ENCODE measurements at regions of chr12 and their contacts with region 1.

Region 1: GRCh38 chr12:55829967-55830600 is 697 bp upstream of the DNAJC14 start:
- DNase-seq: peak; percentile 68
- ATAC-seq: peak; percentile 30

Region 2: DNA sequence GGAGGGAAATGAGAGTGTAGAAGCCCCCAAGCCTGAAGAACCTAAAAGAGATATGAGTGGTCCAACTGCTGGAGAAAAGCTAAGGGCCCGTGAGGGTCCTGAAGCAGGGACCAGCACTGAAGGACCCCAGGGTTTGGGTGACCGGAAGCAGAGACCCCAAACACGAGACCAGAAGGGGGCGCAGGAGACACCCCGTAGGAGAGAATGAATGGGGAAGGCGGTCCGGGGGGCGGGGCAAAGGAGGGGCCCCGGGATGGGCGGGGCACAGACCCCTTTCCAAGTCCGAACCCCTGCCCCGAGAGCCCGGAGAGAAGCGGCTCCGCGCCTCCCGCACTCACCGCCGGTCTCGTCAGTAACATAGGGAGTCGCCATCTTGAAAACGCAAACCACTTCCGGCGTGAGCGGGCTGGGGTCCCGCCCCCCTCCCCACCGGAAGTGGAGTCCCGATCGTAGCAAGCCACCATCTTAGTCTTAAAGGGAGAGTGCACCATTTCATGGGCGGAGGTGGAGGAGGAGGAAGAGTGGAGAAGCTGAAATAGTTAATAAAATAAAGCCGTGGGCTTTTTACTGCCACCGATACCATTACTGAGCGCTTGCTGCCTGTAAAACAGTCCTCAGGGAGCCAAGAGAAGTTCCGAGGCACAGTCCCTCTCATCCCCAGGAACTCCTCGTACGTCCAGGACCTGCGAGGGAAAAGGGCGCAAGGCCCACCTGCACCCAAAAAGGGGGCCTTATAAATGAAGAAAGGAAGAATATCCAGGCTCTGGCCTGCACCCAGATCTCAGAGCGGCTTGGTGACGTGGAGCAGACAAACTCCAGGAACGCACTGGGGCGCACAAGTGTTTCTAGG is 96.9 kb after region 1 on chr12:
- intact Hi-C with region 1: loop called (anchors 5 kb)
- DNase-seq: peak; percentile 93
- ATAC-seq: peak; percentile 91

Region 3: DNA sequence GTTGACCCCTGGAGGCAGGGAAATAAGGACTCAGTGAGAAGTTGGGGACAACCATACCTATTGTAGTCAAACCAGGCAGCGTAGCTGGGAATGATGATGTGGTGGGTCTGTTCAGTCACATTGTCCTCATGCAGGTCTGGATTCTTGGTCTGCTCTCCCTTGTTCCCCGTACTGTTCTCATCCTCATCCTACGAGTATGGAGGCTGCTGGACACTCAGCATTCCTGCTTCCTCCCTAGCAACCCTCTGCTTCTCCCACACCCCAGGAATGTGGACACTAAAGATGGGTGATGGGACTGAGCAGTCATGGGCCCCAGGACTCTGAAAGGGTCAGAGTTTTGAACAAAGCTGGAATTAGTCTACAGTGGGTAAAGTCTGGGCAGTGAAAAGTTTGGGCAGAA is 348.3 kb after region 1 on chr12:
- intact Hi-C with region 1: no loop called
- DNase-seq: no peak
- ATAC-seq: no peak